Heart left ventricle (tissue), 16 donors: ENCODE measurements at regions of chr15 and their contacts with region 1.

Region 1: GRCh38 chr15:90994417-90995311 is at the start of gene PRC1:
- DNase-seq: peak; percentile 98 to 99 (median 99)
- ATAC-seq: peak; percentile 99 to 100 (median 100)
- H3K4me3 ChIP-seq: peak within 1 kb of the TSS; percentile 58 to 99 (median 86)
- H3K27ac ChIP-seq: peak within 1 kb of the TSS; percentile 54 to 91 (median 82)
- H3K4me1 ChIP-seq: peaks cover 0 to 19% (median 3%) of the 10 kb centered on the region in 12 donors
- H3K27me3 ChIP-seq: no peaks in the 10 kb centered on the region
- CTCF ChIP-seq: no peak
- POLR2A ChIP-seq: peak in 1 of 2 donors; percentile 64
- total RNA-seq, gene PRC1: 3.1 to 25.7 (median 4.7) TPM

Region 2: GRCh38 chr15:91022075-91022835 is 27.6 kb after region 1 on chr15 and contains the start of gene VPS33B:
- intact Hi-C with region 1: loop called in 1 of 10 experiments (anchors 2 kb)
- DNase-seq: peak; percentile 86 to 90 (median 90)
- ATAC-seq: peak; percentile 72 to 96 (median 94)
- H3K4me3 ChIP-seq: peak within 1 kb of the TSS; percentile 69 to 100 (median 97)
- H3K27ac ChIP-seq: peak within 1 kb of the TSS in 11 of 12 donors; percentile 48 to 86 (median 77)
- H3K4me1 ChIP-seq: peaks cover 0 to 27% (median 15%) of the 10 kb centered on the region in 12 donors
- H3K27me3 ChIP-seq: no peaks in the 10 kb centered on the region
- CTCF ChIP-seq: no peak
- POLR2A ChIP-seq: peak in 1 of 2 donors; percentile 41
- total RNA-seq, gene VPS33B: 2.9 to 7.9 (median 5.7) TPM